ENCODE measurements at regions of chr18 and their contacts with region 1.

Region 1: DNA sequence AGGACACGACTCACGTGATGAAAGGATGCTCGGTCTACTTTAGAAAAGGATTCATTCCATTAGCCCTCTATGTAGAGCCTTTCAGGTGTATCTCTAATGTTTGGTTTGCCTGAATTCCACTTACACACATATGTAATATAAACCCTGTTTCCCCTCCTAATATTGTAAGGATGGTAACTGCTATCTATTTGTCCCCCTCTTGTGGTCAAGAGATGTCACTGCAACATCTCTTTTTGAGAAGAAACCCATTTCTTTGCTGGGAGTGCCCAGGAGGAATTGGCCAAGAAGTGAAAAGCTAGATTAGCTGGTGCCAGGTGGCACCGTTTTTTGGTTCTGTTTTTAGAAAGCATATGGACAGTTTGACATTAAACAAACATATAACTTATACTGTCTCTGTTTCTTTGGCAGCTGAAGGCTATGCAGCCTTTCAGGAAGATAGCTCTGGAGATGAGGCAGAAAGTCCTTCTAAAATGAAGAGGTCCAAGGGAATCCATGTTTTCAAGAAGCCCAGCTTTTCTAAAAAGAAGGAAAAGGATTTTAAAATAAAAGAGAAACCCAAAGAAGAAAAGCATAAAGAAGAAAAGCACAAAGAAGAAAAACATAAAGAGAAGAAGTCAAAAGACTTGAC is 41.2 kb downstream of the RALBP1 start:
- DNase-seq: peak; percentile 79
- ATAC-seq: 0 out of 2 replicates have a peak, but pooled peaks have one; percentile 2
- H3K4me3 ChIP-seq: no peak overlapping the region
- H3K27ac ChIP-seq: no peak overlapping the region
- H3K4me1 ChIP-seq: peaks cover 36% of the 10 kb centered on the region
- H3K27me3 ChIP-seq: no peaks in the 10 kb centered on the region
- CTCF ChIP-seq: peak; percentile 97

Region 2: DNA sequence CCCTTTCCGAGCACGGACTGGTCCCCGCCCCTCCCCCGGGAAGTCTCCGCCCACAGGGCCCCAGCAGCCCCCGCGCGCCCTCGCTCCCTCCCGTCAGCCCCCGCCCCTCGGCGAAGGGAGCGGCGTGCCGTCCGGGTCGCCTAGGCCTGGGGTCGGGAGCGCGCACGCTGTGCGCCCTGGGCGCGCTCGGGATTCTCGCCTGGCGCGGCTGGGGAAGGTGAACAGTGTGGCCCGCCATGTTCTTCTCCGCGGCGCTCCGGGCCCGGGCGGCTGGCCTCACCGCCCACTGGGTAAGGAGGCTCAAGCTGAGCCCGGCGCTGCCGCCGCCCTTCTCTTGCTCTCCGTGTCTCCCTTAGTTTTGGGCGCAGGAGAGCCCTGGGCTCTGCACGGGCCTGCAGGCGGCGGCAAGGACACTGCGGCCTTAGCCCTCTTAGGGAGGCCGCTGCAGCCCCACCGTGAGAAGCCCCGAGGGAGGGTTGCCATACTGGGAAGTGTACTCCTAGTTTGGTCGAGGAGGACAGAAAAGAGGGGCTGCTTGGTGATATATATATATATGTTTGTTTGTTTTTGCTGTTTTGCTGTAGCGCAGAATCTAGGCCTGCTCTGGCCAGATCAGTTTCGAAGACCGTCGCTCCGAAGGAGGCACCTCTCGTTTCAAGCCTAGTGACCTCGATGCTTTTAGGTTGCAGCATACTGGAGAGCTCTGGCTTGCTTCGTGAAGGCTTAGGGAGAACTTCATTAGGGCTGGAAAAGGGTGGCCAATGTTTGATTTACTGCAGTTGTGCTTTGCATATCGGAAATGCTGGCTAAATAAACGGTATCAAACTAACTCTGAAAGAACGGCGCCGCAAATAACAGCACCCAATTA is 413.8 kb before region 1 on chr18 and contains the start of gene NDUFV2:
- CTCF ChIA-PET with region 1: no interaction called
- POLR2A ChIA-PET with region 1: no interaction called
- intact Hi-C with region 1: loop called (anchors 1 kb)
- DNase-seq: peak; percentile 97
- ATAC-seq: peak; percentile 81
- H3K4me3 ChIP-seq: peak within 1 kb of the TSS; percentile 73
- H3K27ac ChIP-seq: peak within 1 kb of the TSS; percentile 80
- H3K4me1 ChIP-seq: peaks cover 55% of the 10 kb centered on the region
- H3K27me3 ChIP-seq: no peaks in the 10 kb centered on the region
- CTCF ChIP-seq: no peak
- total RNA-seq, gene NDUFV2: 188 and 272 TPM in 2 replicates

Region 3: GRCh38 chr18:9249254-9249653 is 267.3 kb before region 1 on chr18:
- CTCF ChIA-PET with region 1: no interaction called
- POLR2A ChIA-PET with region 1: no interaction called
- intact Hi-C with region 1: loop called (anchors 1 kb)
- DNase-seq: peak; percentile 49
- ATAC-seq: peak; percentile 97
- H3K4me3 ChIP-seq: no peak overlapping the region
- H3K27ac ChIP-seq: no peak overlapping the region
- H3K4me1 ChIP-seq: no peaks in the 10 kb centered on the region
- H3K27me3 ChIP-seq: no peaks in the 10 kb centered on the region
- CTCF ChIP-seq: no peak

Region 4: GRCh38 chr18:9334329-9334972 is 182.1 kb before region 1 on chr18 and contains the start of gene TWSG1:
- CTCF ChIA-PET with region 1: interaction called, 3 read pairs
- POLR2A ChIA-PET with region 1: interaction called, 3 read pairs
- intact Hi-C with region 1: loop called (anchors 2 kb)
- DNase-seq: peak; percentile 90
- ATAC-seq: peak; percentile 82
- H3K4me3 ChIP-seq: peak within 1 kb of the TSS; percentile 79
- H3K27ac ChIP-seq: peak within 1 kb of the TSS; percentile 30
- H3K4me1 ChIP-seq: peaks cover 42% of the 10 kb centered on the region
- H3K27me3 ChIP-seq: no peaks in the 10 kb centered on the region
- CTCF ChIP-seq: peak; percentile 34
- total RNA-seq, gene TWSG1: 30.1 and 32.8 TPM in 2 replicates

Region 5: DNA sequence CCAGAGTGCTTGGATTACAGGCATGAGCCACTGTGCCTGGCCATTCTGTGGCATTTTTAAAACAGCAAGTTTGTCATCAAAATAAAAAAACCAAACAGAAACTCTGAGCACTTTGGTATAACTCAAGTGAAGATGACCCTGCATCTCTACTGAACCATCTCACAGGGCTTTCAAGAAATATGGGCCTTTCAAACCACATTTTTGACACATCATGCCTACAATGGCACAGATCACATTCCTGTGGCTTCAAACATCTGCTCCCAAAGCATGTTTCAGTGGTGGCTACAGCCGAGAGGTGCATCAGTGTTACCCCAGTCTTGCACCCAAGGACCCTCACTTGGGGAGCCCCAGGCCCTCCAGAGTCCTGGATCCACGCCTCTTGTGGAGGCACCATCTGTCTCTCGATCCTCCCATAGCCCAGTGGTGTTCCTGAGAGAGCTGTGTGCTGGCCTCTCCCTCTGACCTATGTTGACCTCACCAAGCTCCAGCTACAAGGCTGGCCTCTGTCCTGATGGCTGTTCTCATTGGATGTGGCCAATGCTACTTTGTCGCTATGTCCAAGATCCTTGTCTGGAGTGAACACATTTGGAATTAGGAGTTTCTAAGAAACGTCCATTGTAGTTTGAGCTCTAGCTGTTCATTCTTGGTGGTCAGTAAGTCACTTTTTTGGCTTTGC is 96.5 kb before region 1 on chr18:
- CTCF ChIA-PET with region 1: no interaction called
- POLR2A ChIA-PET with region 1: no interaction called
- intact Hi-C with region 1: loop called (anchors 1 kb)
- DNase-seq: no peak
- ATAC-seq: no peak
- H3K4me3 ChIP-seq: no peak overlapping the region
- H3K27ac ChIP-seq: no peak overlapping the region
- H3K4me1 ChIP-seq: peaks cover 16% of the 10 kb centered on the region
- H3K27me3 ChIP-seq: no peaks in the 10 kb centered on the region
- CTCF ChIP-seq: no peak

Region 6: DNA sequence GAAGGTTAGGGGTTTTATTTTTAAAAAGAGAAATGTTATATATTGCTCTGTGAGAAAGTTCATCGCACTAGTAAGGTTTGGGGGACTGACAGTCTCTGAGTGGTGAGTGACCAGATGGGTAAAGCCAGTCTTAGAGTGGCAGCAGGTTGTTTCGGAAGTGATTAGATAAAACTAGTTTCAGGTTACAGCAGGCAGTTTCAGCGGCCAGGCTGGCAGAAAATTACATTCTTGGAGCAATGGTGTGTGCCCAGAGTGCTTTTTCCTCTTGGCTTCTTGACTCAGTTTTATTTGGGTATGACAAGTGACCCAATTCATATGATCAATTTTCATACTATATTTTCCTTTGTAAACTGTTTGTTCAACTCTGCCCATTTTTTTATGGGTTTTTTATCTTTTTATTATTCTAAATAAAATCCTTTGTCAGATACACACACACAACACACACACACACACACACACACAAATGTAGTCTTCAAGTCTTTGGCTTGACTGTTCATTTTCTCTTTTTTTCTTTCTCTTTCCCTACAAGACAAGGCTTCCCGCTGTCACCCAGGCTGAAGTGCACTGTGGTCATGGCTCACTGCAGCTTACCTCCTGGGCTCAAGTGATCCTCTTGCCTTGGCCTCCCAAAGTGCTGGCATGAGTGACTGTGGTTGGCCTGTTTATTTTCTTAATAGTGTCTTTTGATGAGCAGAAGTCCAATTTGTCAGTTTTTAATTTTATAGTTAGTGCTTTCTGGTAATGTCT is 10.3 kb before region 1 on chr18:
- CTCF ChIA-PET with region 1: no interaction called
- POLR2A ChIA-PET with region 1: interaction called, 3 read pairs
- intact Hi-C with region 1: loop called (anchors 1 kb)
- DNase-seq: peak; percentile 79
- ATAC-seq: peak; percentile 91
- H3K4me3 ChIP-seq: peak overlapping the region; percentile 8; the same call in 1 of the 2 replicates
- H3K27ac ChIP-seq: peak overlapping the region; percentile 37
- H3K4me1 ChIP-seq: peaks cover 20% of the 10 kb centered on the region
- H3K27me3 ChIP-seq: no peaks in the 10 kb centered on the region
- CTCF ChIP-seq: no peak